ENCODE measurements at regions of chr7 and their contacts with region 1.

Region 1: DNA sequence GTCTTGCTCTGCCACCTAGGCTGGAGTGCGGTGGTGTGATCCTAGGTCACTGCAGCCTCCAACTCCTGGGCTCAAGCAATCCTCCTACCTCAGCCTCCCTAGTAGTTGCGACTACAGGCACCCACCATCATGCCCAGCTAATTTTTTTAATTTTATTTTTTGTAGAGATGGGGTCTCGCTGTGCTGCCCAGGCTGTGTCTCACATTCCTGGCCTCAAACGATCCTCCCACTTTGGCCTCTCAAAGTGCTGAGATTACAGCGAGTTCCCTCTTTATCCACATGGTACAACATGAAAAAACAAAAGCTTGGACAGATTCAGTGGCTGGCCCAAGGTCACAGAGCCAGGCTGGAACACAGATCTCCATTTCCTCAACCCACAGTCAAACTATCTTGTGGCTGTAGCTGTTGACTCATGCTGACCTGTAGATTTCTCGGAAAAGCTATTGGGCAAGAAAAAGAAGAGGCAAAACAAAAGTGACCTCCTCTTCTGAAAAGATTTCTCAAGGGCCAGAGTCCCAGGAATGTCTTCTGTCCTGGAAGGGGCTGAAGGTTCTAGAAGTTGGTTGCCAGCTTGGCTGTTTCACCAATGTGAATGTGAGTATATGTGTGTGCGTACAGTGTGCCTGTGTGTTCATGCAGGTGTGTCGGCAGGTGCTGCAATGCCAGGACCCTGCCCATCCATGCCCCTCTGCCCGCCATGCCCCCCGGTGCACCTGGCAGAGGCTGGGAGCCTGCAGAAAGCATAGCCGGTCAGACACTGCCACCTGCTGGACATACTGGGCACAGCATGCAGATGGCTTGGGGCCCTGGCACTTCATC is 28.4 kb downstream of the TMEM130 start:
- DNase-seq: peak; percentile 81
- CTCF ChIP-seq: peak; percentile 97

Region 2: DNA sequence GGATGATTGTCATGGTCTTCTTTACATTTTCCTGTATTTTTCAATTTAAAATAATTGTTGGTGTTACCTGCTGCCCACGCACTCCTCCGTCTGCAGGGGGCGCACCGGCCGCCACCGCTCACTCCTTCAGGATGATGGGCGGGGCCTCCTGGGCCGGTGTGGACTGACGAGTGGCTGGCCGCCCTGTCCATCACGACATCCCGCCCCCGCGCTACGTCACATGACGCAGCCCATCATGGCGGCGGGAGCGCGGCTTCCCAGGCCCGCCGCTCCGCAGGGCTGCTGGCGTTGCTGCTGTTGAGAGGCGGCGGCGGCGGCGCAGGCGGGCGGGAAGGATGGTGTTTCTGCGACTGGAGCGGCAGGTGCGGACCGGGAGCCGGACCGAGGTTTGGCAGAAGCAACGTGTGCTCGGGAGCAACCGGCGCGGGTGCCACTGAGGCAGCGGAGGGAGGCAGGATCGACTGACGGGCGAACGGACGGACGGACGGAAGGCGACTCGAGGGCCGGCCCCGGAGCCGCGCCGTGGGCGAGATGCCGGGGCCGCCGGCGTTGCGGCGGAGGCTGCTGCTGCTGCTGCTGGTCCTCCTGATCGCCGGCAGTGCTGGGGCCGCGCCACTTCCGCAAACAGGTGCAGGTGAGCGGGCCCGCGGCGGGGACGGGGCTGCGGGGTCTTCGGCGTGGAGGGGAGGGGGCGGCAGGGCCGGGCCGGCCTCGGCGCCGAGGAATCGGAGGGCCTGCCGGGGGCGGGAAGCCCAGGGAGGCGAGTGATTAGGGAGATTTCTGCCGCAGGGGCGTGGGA is 734.5 kb before region 1 on chr7 and contains the start of gene LMTK2:
- in situ Hi-C with region 1: no loop called
- DNase-seq: peak; percentile 98
- CTCF ChIP-seq: peak; percentile 94

Region 3: DNA sequence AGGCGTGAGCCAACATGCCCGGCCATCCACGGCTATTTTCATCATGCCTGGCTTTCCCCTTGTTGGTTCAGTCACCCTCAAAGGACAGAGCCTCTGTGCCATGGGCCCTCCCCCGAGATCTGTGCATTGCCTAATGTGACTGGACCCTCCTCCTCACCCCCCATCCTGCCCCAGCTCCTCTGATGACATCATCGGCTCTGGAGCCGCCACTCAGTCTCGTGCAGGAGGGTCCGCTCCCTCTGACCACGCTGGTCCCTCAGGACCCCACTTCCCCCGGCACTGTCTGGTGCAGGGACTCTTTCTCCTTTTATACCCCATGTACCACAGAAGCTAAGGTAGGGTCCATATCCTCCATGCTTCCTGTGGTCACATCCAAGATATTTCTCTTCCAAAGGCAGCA is 407.3 kb before region 1 on chr7:
- in situ Hi-C with region 1: loop called (anchors 5 kb)
- DNase-seq: no peak
- CTCF ChIP-seq: no peak

Region 4: DNA sequence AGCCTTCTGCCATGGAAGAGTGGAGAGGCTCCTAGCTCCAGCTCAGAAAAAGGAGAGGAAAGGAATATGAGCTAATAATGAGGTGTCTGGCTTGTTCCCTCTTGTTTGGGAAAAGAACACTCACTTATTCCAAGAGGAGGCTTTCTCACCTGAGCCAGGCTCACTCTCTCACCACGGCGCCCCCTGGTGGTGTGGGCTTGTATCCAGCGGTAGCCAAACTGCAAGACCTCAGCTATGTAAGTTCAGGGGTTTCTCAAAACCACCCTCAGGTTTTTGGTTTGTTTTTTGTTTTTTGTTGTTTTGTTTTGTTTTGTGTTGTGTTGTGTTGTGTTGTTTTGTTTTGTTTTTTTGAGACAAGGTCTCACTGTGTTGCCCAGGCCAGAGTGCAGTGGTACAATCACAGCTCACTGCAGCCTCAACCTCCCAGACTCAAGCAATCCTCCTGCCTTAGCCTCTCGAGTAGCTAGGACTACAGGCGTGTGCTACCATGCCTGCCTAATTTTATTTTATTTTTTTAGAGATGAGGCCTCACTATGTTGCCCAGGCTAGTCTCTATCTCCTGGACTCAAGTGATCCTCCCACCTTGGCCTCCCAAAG is 95.6 kb before region 1 on chr7:
- in situ Hi-C with region 1: loop called (anchors 10 kb)
- DNase-seq: peak; percentile 80
- CTCF ChIP-seq: peak; percentile 84

Region 5: GRCh38 chr7:99155213-99155612 is 313.8 kb after region 1 on chr7:
- in situ Hi-C with region 1: no loop called
- DNase-seq: no peak
- CTCF ChIP-seq: no peak